Endothelial cell of umbilical vein (primary cell): ENCODE measurements at regions of chr2 and their contacts with region 1.

Region 1: GRCh38 chr2:226641008-226641407 is 158.6 kb downstream of the IRS1 start:
- DNase-seq: no peak
- H3K4me3 ChIP-seq: no peak overlapping the region
- H3K27ac ChIP-seq: no peak overlapping the region
- H3K4me1 ChIP-seq: no peaks in the 10 kb centered on the region
- H3K27me3 ChIP-seq: peaks cover 15 to 17% of the 10 kb centered on the region in 2 experiments
- CTCF ChIP-seq: no peak
- POLR2A ChIP-seq: no peak

Region 2: GRCh38 chr2:226622484-226622883 is 18.5 kb before region 1 on chr2:
- CTCF ChIA-PET with region 1: no interaction called
- POLR2A ChIA-PET with region 1: no interaction called
- dilution Hi-C with region 1: no loop called
- intact Hi-C with region 1: loop called (anchors 1 kb)
- DNase-seq: no peak
- H3K4me3 ChIP-seq: no peak overlapping the region
- H3K27ac ChIP-seq: no peak overlapping the region
- H3K4me1 ChIP-seq: no peaks in the 10 kb centered on the region
- H3K27me3 ChIP-seq: peaks cover 0 to 2% of the 10 kb centered on the region in 2 experiments
- CTCF ChIP-seq: no peak
- POLR2A ChIP-seq: no peak

Region 3: GRCh38 chr2:226673314-226673723 is 32.3 kb after region 1 on chr2:
- CTCF ChIA-PET with region 1: no interaction called
- POLR2A ChIA-PET with region 1: no interaction called
- dilution Hi-C with region 1: no loop called
- intact Hi-C with region 1: no loop called
- DNase-seq: no peak
- H3K4me3 ChIP-seq: no peak overlapping the region
- H3K27ac ChIP-seq: no peak overlapping the region
- H3K4me1 ChIP-seq: no peaks in the 10 kb centered on the region
- H3K27me3 ChIP-seq: no peaks in the 10 kb centered on the region
- CTCF ChIP-seq: no peak
- POLR2A ChIP-seq: no peak